ENCODE measurements at regions of chr15 and their contacts with region 1.

Region 1: GRCh38 chr15:73927476-73928240 is 1.4 kb downstream of the LOXL1 start:
- DNase-seq: peak; percentile 73
- H3K4me3 ChIP-seq: peak overlapping the region; percentile 86
- H3K27ac ChIP-seq: peak overlapping the region; percentile 89
- H3K4me1 ChIP-seq: peaks cover 44% of the 10 kb centered on the region
- H3K27me3 ChIP-seq: no peaks in the 10 kb centered on the region
- CTCF ChIP-seq: peak; percentile 73

Region 2: GRCh38 chr15:73763931-73764330 is 163.7 kb before region 1 on chr15:
- CTCF ChIA-PET with region 1: no interaction called
- POLR2A ChIA-PET with region 1: interaction called, 35 read pairs
- intact Hi-C with region 1: no loop called
- DNase-seq: no peak
- H3K4me3 ChIP-seq: no peak overlapping the region
- H3K27ac ChIP-seq: no peak overlapping the region
- H3K4me1 ChIP-seq: no peaks in the 10 kb centered on the region
- H3K27me3 ChIP-seq: peaks cover 27% of the 10 kb centered on the region
- CTCF ChIP-seq: no peak

Region 3: DNA sequence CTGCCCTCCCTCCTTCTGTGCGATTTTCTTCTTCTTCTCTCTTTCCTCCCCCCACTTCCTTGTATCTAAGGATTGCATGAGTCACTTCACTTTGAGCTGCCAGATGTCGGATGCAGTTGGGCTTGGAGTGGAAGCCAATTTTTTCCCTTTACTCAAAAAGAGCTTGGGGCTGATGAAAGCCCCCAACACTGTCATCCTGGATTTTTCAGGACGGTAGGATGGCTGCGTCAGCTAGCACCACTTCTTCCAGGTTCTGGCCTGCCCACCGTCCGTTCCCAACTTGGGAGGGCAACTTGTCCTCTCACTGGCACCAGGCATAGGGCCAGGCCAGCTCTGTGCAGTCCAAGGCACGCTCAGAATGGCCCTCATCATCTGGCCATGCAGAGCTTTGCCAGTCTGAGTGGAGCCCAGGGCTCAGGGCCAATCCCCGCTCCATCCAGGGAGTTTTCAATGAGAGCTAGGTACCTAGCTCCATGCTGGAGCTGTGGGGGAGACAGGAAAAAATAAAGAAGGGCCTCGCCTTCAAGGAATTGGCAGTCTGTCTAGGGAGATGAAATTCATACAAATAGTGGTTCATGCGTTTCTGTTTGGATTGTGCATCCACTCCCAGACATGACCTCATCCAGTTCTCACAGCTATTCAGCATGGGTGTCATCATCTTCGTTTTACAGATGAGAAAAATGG is 126.9 kb before region 1 on chr15:
- CTCF ChIA-PET with region 1: no interaction called
- POLR2A ChIA-PET with region 1: no interaction called
- intact Hi-C with region 1: no loop called
- DNase-seq: peak; percentile 35
- H3K4me3 ChIP-seq: no peak overlapping the region
- H3K27ac ChIP-seq: no peak overlapping the region
- H3K4me1 ChIP-seq: no peaks in the 10 kb centered on the region
- H3K27me3 ChIP-seq: no peaks in the 10 kb centered on the region
- CTCF ChIP-seq: no peak

Region 4: DNA sequence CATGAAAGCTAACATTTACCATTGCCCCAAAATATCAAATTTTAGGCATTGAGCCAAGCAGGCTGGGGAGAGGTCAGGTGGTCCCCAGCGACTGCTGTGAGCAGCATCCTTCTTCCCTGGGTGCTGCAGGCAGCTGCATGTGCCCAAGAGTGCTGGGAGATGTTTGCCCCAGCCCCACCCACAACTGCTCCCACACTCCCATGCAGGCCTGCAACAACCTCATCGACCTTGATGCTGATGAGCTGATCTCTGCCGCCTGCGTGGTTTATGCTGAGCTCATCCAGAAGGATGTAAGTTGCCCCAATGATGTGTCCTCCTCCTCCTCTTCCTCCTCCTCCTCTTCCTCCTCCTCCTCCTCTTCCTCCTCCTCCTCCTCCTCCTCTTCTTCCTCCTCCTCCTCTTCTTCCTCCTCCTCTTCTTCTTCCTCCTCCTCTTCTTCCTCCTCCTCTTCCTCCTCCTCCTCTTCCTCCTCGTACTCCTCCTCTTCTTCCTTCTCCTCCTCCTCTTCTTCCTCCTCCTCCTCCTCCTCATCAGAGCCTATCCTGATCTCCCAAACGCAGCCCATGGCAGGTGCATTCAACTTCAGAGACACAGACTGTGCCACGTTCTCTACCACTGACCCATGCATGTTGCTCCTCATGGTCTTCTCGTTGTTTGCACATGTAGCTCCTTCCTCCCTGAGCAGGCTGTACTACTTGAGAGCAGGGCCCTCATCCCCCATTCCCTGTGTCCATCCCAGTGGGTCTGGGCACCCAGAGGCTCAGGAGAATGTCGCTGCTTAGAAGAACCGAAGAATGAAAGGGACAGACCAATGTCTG is 39.2 kb before region 1 on chr15:
- CTCF ChIA-PET with region 1: interaction called, 15 read pairs
- POLR2A ChIA-PET with region 1: no interaction called
- intact Hi-C with region 1: no loop called
- DNase-seq: no peak
- H3K4me3 ChIP-seq: no peak overlapping the region
- H3K27ac ChIP-seq: no peak overlapping the region
- H3K4me1 ChIP-seq: no peaks in the 10 kb centered on the region
- H3K27me3 ChIP-seq: no peaks in the 10 kb centered on the region
- CTCF ChIP-seq: no peak

Region 5: DNA sequence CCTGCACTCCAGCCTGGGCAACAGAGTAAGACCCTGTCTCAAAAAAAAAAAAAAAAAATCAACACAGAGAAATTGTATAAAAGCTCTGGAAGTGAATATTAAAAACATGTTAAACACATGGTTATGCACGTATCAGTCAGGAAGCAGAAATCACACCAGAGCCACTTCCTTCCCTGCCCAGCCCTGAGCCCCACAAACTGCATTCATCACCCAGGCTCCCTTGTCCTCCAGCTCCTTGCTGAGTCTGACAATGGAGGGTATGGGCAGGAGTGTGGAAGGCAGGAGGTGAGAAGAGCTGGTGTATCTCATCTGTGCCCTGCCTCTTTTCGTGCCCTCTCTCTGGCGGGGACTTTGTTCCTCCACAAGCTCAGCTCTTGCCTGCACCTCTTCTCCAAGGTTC is 13.5 kb before region 1 on chr15:
- CTCF ChIA-PET with region 1: interaction called, 12 read pairs
- POLR2A ChIA-PET with region 1: interaction called, 4 read pairs
- intact Hi-C with region 1: no loop called
- DNase-seq: no peak
- H3K4me3 ChIP-seq: no peak overlapping the region
- H3K27ac ChIP-seq: no peak overlapping the region
- H3K4me1 ChIP-seq: peaks cover 24% of the 10 kb centered on the region
- H3K27me3 ChIP-seq: no peaks in the 10 kb centered on the region
- CTCF ChIP-seq: no peak